Naive thymus-derived CD4-positive, alpha-beta T cell (primary cell): ENCODE measurements at regions of chr3 and their contacts with region 1.

Region 1: GRCh38 chr3:129893581-129894070 is at the start of gene TMCC1:
- DNase-seq: peak; percentile 89 to 95 (median 93)
- ATAC-seq: peak; percentile 97
- H3K4me3 ChIP-seq: peak within 1 kb of the TSS; percentile 80
- H3K4me3 Mint-ChIP-seq: peak within 1 kb of the TSS; percentile 85 to 95 (median 94)
- H3K27ac ChIP-seq: peak within 1 kb of the TSS; percentile 94
- H3K27ac Mint-ChIP-seq: peak within 1 kb of the TSS; percentile 77 to 97 (median 92)
- H3K4me1 ChIP-seq: peaks cover 18 to 32% of the 10 kb centered on the region in 2 donors
- H3K4me1 Mint-ChIP-seq: peaks cover 32 to 50% (median 46%) of the 10 kb centered on the region in 7 donors
- H3K27me3 ChIP-seq: no peaks in the 10 kb centered on the region
- H3K27me3 Mint-ChIP-seq: peaks cover 0 to 3% (median 0%) of the 10 kb centered on the region in 5 donors
- total RNA-seq, gene TMCC1: 20.5 to 39.4 (median 36.5) TPM

Region 2: GRCh38 chr3:128650096-128651050 is 1243.3 kb before region 1 on chr3 and contains the start of gene RPN1:
- CTCF ChIA-PET with region 1: no interaction called
- POLR2A ChIA-PET with region 1: no interaction called
- intact Hi-C with region 1: loop called in 1 of 2 experiments (anchors 10 kb)
- DNase-seq: peak; percentile 81 to 98 (median 97)
- ATAC-seq: peak; percentile 98
- H3K4me3 ChIP-seq: peak within 1 kb of the TSS; percentile 94
- H3K4me3 Mint-ChIP-seq: peak within 1 kb of the TSS; percentile 83 to 92 (median 90)
- H3K27ac ChIP-seq: peak within 1 kb of the TSS; percentile 99
- H3K27ac Mint-ChIP-seq: peak within 1 kb of the TSS; percentile 73 to 94 (median 92)
- H3K4me1 ChIP-seq: peaks cover 12 to 17% of the 10 kb centered on the region in 2 donors
- H3K4me1 Mint-ChIP-seq: peaks cover 25 to 43% (median 37%) of the 10 kb centered on the region in 7 donors
- H3K27me3 ChIP-seq: no peaks in the 10 kb centered on the region
- H3K27me3 Mint-ChIP-seq: no peaks in the 10 kb centered on the region
- total RNA-seq, gene RPN1: 76.7 to 203 (median 88.5) TPM

Region 3: DNA sequence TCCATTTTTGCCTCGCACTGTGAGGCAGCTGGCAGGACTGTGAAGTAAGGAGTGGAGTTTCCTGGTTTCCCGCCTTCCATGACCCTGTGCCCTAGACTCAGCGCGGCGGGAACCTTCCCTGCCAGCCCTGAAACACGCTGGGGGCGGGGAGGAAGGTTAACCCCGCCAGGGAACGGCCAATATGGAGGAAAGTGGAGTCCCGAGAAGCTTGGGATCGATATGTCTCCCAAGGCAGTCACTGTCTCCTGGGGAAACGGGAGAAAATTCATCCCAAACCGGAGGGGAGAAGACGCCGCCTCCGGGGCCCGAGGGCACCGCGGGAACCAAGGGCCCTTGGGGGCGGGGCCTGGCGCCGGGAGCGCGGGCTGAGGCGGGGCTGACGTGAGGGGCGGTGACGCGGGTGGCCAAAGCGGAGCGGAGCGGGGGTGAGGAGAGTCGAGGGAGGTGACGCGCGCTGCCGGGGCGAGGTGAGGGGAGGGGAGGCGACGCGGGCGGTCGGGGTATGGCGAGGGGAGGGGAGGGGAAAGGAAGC is 615.1 kb before region 1 on chr3 and contains the start of gene HMCES:
- CTCF ChIA-PET with region 1: no interaction called
- POLR2A ChIA-PET with region 1: no interaction called
- intact Hi-C with region 1: loop called (anchors 2 kb)
- DNase-seq: peak; percentile 92 to 98 (median 95)
- ATAC-seq: peak; percentile 98
- H3K4me3 ChIP-seq: peak within 1 kb of the TSS; percentile 99
- H3K4me3 Mint-ChIP-seq: peak within 1 kb of the TSS; percentile 95 to 99 (median 98)
- H3K27ac ChIP-seq: peak within 1 kb of the TSS; percentile 99
- H3K27ac Mint-ChIP-seq: peak within 1 kb of the TSS; percentile 89 to 100 (median 98)
- H3K4me1 ChIP-seq: peaks cover 14 to 29% of the 10 kb centered on the region in 2 donors
- H3K4me1 Mint-ChIP-seq: peaks cover 21 to 50% (median 37%) of the 10 kb centered on the region in 7 donors
- H3K27me3 ChIP-seq: no peaks in the 10 kb centered on the region
- H3K27me3 Mint-ChIP-seq: no peaks in the 10 kb centered on the region
- total RNA-seq, gene HMCES: 45.7 to 56.4 (median 52.5) TPM

Region 4: DNA sequence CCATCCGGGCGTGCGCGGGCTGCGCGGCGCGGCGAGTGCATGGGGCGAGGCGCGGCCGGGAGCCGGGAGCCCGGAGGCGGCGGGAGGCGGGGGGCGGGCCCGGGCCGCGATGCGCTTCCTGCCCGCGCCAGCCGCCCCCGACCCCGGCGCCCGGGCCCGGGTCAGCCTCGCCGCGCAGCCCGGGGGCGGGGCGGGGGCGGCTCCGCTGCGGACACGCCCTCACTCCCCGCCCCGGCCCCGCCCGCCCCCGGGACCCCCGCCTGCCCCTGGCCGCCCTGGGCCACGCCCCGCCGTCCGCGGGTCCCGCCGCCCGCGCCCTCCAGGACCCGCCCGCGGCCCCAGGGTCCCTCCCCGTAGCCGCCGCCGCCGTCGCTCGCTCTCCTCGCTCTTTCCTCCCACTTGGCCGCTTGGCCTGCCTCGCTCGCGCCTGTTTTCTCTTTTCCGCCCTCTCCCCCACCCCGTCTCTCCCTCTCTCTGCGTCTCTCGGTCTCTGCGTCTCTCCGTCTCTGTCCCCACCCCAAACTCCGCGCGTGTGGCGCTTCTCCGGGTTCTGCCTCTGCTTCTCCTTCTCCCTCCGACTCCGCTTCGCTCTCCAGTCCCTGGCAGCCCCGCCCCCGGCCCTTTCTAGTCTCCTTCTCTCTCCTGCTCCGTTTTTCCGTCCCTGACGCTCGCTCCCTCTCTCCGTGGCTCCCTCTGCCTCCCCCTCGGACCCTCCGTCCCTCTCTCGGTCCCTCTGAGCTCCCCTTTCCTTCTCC is 286.8 kb before region 1 on chr3 and contains the start of gene PLXND1:
- CTCF ChIA-PET with region 1: no interaction called
- POLR2A ChIA-PET with region 1: interaction called, 7 read pairs
- intact Hi-C with region 1: loop called in 1 of 2 experiments (anchors 1 kb)
- DNase-seq: peak in 5 of 9 donors; percentile 14 to 49 (median 25)
- ATAC-seq: peak; percentile 76
- H3K4me3 ChIP-seq: peak within 1 kb of the TSS; percentile 53
- H3K4me3 Mint-ChIP-seq: peak within 1 kb of the TSS; percentile 89 to 98 (median 93)
- H3K27ac ChIP-seq: peak within 1 kb of the TSS; percentile 51
- H3K27ac Mint-ChIP-seq: peak within 1 kb of the TSS; percentile 35 to 92 (median 84)
- H3K4me1 ChIP-seq: peaks cover 0 to 6% of the 10 kb centered on the region in 2 donors
- H3K4me1 Mint-ChIP-seq: peaks cover 11 to 25% (median 14%) of the 10 kb centered on the region in 7 donors
- H3K27me3 ChIP-seq: peaks cover 0 to 6% of the 10 kb centered on the region in 2 donors
- H3K27me3 Mint-ChIP-seq: peaks cover 8 to 64% (median 11%) of the 10 kb centered on the region in 5 donors
- total RNA-seq, gene PLXND1: 1.9 to 82.5 (median 7.5) TPM

Region 5: GRCh38 chr3:129824926-129825541 is 68.6 kb before region 1 on chr3:
- CTCF ChIA-PET with region 1: no interaction called
- POLR2A ChIA-PET with region 1: interaction called, 3 read pairs
- intact Hi-C with region 1: loop called in 1 of 2 experiments (anchors 2 kb)
- DNase-seq: peak in 8 of 9 donors; percentile 20 to 52 (median 40)
- ATAC-seq: peak; percentile 53
- H3K4me3 ChIP-seq: no peak overlapping the region
- H3K4me3 Mint-ChIP-seq: no peak overlapping the region
- H3K27ac ChIP-seq: no peak overlapping the region
- H3K27ac Mint-ChIP-seq: no peak overlapping the region
- H3K4me1 ChIP-seq: peaks cover 0 to 7% of the 10 kb centered on the region in 2 donors
- H3K4me1 Mint-ChIP-seq: peaks cover 12 to 26% (median 23%) of the 10 kb centered on the region in 7 donors
- H3K27me3 ChIP-seq: no peaks in the 10 kb centered on the region
- H3K27me3 Mint-ChIP-seq: no peaks in the 10 kb centered on the region

Region 6: DNA sequence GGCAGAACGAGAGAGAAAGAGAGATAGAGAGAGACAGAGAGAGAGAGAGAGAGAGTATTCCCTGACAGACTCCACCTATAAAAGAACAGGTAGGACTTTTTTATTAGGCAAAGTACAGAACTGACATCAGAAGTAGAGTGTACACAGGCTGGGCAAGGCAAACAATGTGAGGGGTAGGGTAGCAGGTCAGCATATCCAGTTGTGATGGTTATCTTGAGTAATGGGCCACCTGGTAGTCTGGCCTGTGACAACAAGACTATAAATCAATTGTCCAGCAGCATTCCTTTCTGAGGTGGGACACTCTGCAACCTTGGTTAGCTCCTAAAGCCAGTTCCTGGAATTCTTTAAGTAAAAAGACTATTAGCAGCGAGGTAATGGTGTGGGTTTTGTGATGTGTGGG is 14.8 kb after region 1 on chr3:
- CTCF ChIA-PET with region 1: no interaction called
- POLR2A ChIA-PET with region 1: no interaction called
- intact Hi-C with region 1: no loop called
- DNase-seq: no peak
- ATAC-seq: no peak
- H3K4me3 ChIP-seq: no peak overlapping the region
- H3K4me3 Mint-ChIP-seq: no peak overlapping the region
- H3K27ac ChIP-seq: no peak overlapping the region
- H3K27ac Mint-ChIP-seq: no peak overlapping the region
- H3K4me1 ChIP-seq: no peaks in the 10 kb centered on the region
- H3K4me1 Mint-ChIP-seq: no peaks in the 10 kb centered on the region
- H3K27me3 ChIP-seq: no peaks in the 10 kb centered on the region
- H3K27me3 Mint-ChIP-seq: peaks cover 0 to 4% (median 0%) of the 10 kb centered on the region in 5 donors

Region 7: GRCh38 chr3:130111185-130111864 is 217.7 kb after region 1 on chr3:
- CTCF ChIA-PET with region 1: no interaction called
- POLR2A ChIA-PET with region 1: no interaction called
- intact Hi-C with region 1: loop called (anchors 1 kb)
- DNase-seq: peak; percentile 96 to 99 (median 98)
- ATAC-seq: peak; percentile 100
- H3K4me3 ChIP-seq: peak overlapping the region; percentile 58
- H3K4me3 Mint-ChIP-seq: peak overlapping the region; percentile 85 to 100 (median 98)
- H3K27ac ChIP-seq: peak overlapping the region; percentile 90
- H3K27ac Mint-ChIP-seq: peak overlapping the region; percentile 91 to 100 (median 100)
- H3K4me1 ChIP-seq: no peaks in the 10 kb centered on the region
- H3K4me1 Mint-ChIP-seq: peaks cover 11 to 22% (median 13%) of the 10 kb centered on the region in 7 donors
- H3K27me3 ChIP-seq: no peaks in the 10 kb centered on the region
- H3K27me3 Mint-ChIP-seq: peaks cover 0 to 14% (median 0%) of the 10 kb centered on the region in 5 donors

Region 8: GRCh38 chr3:130925628-130926027 is 1032.0 kb after region 1 on chr3:
- CTCF ChIA-PET with region 1: no interaction called
- POLR2A ChIA-PET with region 1: no interaction called
- intact Hi-C with region 1: no loop called
- DNase-seq: no peak
- ATAC-seq: no peak
- H3K4me3 ChIP-seq: no peak overlapping the region
- H3K4me3 Mint-ChIP-seq: no peak overlapping the region
- H3K27ac ChIP-seq: no peak overlapping the region
- H3K27ac Mint-ChIP-seq: no peak overlapping the region
- H3K4me1 ChIP-seq: no peaks in the 10 kb centered on the region
- H3K4me1 Mint-ChIP-seq: peaks cover 19 to 73% (median 56%) of the 10 kb centered on the region in 7 donors
- H3K27me3 ChIP-seq: no peaks in the 10 kb centered on the region
- H3K27me3 Mint-ChIP-seq: no peaks in the 10 kb centered on the region

Region 9: GRCh38 chr3:131026321-131027178 is 1132.9 kb after region 1 on chr3 and contains the starts of genes ASTE1 and NEK11:
- CTCF ChIA-PET with region 1: no interaction called
- POLR2A ChIA-PET with region 1: no interaction called
- intact Hi-C with region 1: loop called in 1 of 2 experiments (anchors 10 kb)
- DNase-seq: peak; percentile 87 to 95 (median 92)
- ATAC-seq: peak; percentile 99
- H3K4me3 ChIP-seq: peak within 1 kb of the TSS; percentile 97
- H3K4me3 Mint-ChIP-seq: peak within 1 kb of the TSS; percentile 85 to 96 (median 89)
- H3K27ac ChIP-seq: peak within 1 kb of the TSS; percentile 95
- H3K27ac Mint-ChIP-seq: peak within 1 kb of the TSS; percentile 96 to 99 (median 97)
- H3K4me1 ChIP-seq: peaks cover 34 to 40% of the 10 kb centered on the region in 2 donors
- H3K4me1 Mint-ChIP-seq: peaks cover 29 to 59% (median 52%) of the 10 kb centered on the region in 7 donors
- H3K27me3 ChIP-seq: no peaks in the 10 kb centered on the region
- H3K27me3 Mint-ChIP-seq: peaks cover 0 to 6% (median 0%) of the 10 kb centered on the region in 5 donors
- total RNA-seq, gene ASTE1: 18.7 to 38.5 (median 27.0) TPM
- total RNA-seq, gene NEK11: 1.7 to 9.0 (median 5.3) TPM